ENCODE measurements at regions of chr5 and their contacts with region 1.

Region 1: DNA sequence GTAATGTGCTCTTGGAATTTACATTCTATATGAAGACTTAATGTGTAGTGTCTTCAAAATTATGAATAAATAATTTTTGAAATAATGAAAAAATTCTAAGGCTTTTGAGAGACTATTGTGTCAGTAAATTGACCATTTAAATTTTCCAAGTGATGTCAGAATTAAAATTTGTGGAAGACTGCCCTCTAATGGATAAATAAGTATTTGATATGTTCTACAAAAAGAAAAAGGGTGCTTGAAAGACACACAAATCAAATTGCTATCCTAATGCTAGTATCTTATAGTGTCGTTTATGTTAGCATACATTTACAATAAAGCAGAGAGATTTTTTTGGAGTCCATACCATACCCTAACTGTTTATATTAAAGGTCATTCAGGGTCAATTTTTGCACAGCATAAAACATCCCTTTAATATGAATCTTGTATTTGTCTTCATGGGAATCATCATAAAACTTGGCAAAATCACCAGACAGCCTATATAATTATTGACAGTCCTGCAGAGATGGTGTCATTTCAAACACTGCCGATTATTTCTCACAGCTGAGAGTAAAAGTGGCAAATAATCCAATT is 120.8 kb upstream of the SLC27A6 start:
- DNase-seq: no peak

Region 2: GRCh38 chr5:127564002-127564769 is 1280.3 kb before region 1 on chr5:
- intact Hi-C with region 1: loop called (anchors 5 kb)
- DNase-seq: peak in 2 of 10 donors; percentile 37 to 43

Region 3: DNA sequence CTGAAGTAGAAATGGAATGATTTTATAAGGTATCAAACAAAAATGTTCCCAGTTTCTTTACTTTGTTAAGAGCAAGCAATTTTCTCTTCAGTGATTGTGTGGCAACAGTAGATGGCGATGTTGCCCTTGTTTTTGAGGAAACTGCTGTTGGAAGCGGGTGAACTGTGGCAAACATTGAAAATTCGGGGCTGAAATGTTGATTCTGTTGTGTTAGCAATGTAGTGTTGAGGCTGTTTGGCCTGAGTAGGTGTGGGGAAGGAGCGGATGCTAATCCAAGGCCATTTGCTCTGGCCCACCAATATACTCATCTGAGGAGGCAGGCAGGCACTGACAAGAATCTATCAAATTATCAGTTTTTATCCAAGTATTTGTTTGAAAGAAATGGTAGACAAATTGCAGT is 631.1 kb before region 1 on chr5:
- intact Hi-C with region 1: loop called (anchors 2 kb)
- DNase-seq: peak in 5 of 10 donors; percentile 37 to 77 (median 64)

Region 4: GRCh38 chr5:128395073-128395472 is 449.4 kb before region 1 on chr5:
- intact Hi-C with region 1: no loop called
- DNase-seq: no peak

Region 5: DNA sequence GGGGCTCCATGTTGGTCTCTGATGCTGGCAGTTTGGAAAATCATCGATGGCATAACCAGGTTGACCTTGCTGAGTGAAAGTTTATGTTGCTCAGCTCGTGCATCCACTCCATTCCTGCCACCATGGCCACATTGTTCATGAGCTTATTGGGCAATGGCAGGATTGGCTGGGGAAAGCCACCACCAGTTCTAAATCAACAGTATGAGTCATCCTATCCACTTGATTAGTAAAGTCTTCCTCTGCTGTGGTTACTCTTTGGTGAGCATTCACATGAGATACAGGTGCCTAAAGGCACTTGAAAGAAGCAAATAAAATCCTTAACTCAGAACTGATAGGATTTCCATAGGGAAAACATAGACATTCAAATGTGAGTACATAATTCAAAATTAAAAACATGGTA is 174.6 kb before region 1 on chr5:
- intact Hi-C with region 1: loop called (anchors 2 kb)
- DNase-seq: no peak

Region 6: GRCh38 chr5:128749136-128749898 is 95.1 kb before region 1 on chr5:
- intact Hi-C with region 1: no loop called
- DNase-seq: no peak

Measured in posterior cingulate gyrus (tissue), 11 donors.